GM23248 (cell line): ENCODE measurements at regions of chr14 and their contacts with region 1.

Region 1: GRCh38 chr14:50773632-50774541 is 57.1 kb downstream of the NIN start:
- DNase-seq: peak; percentile 65
- H3K4me3 ChIP-seq: no peak overlapping the region
- H3K27ac ChIP-seq: peak overlapping the region; percentile 68
- H3K4me1 ChIP-seq: peaks cover 41% of the 10 kb centered on the region
- H3K27me3 ChIP-seq: no peaks in the 10 kb centered on the region

Region 2: GRCh38 chr14:49808780-49809179 is 965.1 kb before region 1 on chr14:
- in situ Hi-C with region 1: no loop called
- DNase-seq: no peak
- H3K4me3 ChIP-seq: no peak overlapping the region
- H3K27ac ChIP-seq: no peak overlapping the region
- H3K4me1 ChIP-seq: no peaks in the 10 kb centered on the region
- H3K27me3 ChIP-seq: no peaks in the 10 kb centered on the region

Region 3: DNA sequence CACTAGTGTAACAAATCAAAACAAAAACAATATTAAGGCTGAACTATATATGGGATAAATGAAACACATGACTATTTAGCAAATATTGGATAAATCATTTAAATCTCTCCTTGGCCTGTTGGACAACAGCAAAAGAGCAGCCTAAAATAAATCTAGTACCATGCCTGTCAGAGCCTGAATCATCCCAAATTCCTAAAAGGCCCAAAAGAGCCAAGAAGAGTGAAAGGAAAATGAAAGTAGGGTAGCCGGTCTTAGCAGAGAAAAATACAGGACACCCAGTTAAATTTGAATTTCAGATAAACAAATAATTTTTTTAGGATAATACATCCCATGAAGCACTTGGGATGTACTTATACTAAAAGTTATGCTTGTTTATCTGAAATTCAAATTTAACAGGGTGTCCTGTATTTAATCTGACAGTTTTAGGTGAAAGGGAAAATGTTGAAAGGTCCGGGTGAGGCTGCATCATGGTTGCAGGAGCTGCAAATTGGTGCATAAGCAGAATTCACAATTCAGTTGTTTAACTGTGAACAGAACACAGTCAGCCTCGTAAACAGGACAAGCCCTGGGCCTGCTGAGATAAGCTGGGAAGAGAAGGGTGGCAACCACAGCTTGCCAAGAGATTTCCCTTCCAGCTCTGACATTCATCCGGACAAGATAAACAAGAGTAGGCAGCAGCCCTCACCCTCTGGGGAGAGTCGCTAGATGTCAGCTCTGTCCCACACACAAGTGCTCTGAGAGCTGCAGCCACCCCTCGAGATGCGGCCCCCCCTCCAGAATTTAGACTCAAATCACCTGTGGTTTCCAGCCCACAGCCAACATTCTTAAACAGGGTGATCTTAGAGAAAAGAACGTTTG is 431.4 kb before region 1 on chr14:
- in situ Hi-C with region 1: loop called (anchors 25 kb)
- DNase-seq: peak; percentile 76
- H3K4me3 ChIP-seq: peak overlapping the region; percentile 65
- H3K27ac ChIP-seq: peak overlapping the region; percentile 49
- H3K4me1 ChIP-seq: peaks cover 40% of the 10 kb centered on the region
- H3K27me3 ChIP-seq: no peaks in the 10 kb centered on the region

Region 4: DNA sequence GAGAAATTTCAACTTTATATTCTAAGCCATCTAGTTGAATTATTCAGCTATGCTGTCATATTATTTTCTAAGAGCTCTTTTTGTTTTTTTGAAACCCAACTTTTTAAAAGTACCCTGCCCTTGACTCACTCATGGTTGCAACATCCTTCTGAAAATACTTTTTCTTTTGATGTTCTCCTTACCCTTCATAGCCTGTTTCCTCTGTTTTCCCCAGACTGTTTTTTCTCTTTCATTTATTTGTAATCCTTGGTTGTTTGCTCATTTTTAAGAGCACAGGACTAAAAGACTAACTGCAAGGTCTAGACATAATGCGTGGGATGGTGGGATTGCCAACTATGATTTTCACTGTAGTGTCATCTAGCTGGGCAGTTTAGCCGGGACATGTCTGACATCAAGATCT is 356.0 kb before region 1 on chr14:
- in situ Hi-C with region 1: no loop called
- DNase-seq: peak; percentile 78
- H3K4me3 ChIP-seq: no peak overlapping the region
- H3K27ac ChIP-seq: peak overlapping the region; percentile 21
- H3K4me1 ChIP-seq: peaks cover 10% of the 10 kb centered on the region
- H3K27me3 ChIP-seq: no peaks in the 10 kb centered on the region

Region 5: DNA sequence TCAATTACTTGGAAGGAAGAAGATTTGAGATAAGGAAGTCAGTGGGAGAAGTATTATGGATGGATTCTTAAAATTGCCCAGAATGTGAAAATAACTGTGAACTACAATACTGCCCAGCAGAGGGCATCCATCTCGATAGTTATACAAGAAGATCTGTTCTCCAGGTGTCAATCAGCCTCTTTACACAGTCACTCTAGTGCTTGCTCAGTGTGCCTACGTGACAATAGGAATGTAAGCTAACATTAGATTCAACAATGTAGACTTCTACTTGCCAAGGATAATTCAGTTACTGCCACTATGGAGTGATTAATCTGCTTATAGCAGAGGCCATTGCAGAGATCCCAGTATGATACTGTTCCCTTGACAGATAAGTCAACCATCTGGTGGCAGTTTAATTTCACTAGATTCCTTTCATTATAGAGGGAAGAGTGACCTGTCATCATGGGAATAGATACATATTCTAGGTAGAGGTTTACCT is 230.9 kb before region 1 on chr14:
- in situ Hi-C with region 1: loop called (anchors 10 kb)
- DNase-seq: peak; percentile 75
- H3K4me3 ChIP-seq: no peak overlapping the region
- H3K27ac ChIP-seq: no peak overlapping the region
- H3K4me1 ChIP-seq: no peaks in the 10 kb centered on the region
- H3K27me3 ChIP-seq: no peaks in the 10 kb centered on the region

Region 6: GRCh38 chr14:50619556-50620141 is 154.2 kb before region 1 on chr14:
- in situ Hi-C with region 1: loop called (anchors 10 kb)
- DNase-seq: peak; percentile 60
- H3K4me3 ChIP-seq: no peak overlapping the region
- H3K27ac ChIP-seq: no peak overlapping the region
- H3K4me1 ChIP-seq: no peaks in the 10 kb centered on the region
- H3K27me3 ChIP-seq: no peaks in the 10 kb centered on the region